Breast epithelium (tissue), 4 donors: ENCODE measurements at regions of chr1 and their contacts with region 1.

Region 1: DNA sequence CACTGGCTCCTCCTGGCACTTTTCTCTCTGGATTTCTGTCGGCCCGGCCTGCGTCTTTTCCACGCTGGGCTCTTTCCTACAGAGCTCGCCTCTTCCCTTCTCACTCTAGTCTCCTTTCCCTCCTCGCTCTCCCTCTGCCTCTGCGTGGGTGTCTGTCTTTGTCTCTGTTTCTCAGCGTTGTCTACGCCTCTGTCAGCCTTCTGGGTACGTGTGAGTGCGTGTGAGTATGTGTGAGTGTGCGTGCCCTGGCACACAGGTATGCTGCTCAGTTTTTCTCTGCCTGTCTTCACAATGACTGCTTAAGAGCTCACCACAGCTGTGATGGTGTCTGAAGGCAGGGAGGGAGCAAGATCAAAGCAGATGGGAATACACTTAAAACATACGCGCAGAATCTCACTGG is 77.7 kb downstream of the KIRREL1 start:
- DNase-seq: no peak
- H3K4me3 ChIP-seq: no peak overlapping the region
- H3K27ac ChIP-seq: peak overlapping the region in 1 of 2 donors; percentile 58
- H3K4me1 ChIP-seq: peaks cover 0 to 9% of the 10 kb centered on the region in 2 donors
- H3K27me3 ChIP-seq: no peaks in the 10 kb centered on the region
- CTCF ChIP-seq: no peak
- POLR2A ChIP-seq: no peak

Region 2: GRCh38 chr1:157419845-157420542 is 651.1 kb before region 1 on chr1:
- intact Hi-C with region 1: loop called (anchors 5 kb)
- DNase-seq: no peak
- H3K4me3 ChIP-seq: no peak overlapping the region
- H3K27ac ChIP-seq: no peak overlapping the region
- H3K4me1 ChIP-seq: no peaks in the 10 kb centered on the region
- H3K27me3 ChIP-seq: peaks cover 0 to 3% of the 10 kb centered on the region in 2 donors
- CTCF ChIP-seq: no peak
- POLR2A ChIP-seq: no peak

Region 3: DNA sequence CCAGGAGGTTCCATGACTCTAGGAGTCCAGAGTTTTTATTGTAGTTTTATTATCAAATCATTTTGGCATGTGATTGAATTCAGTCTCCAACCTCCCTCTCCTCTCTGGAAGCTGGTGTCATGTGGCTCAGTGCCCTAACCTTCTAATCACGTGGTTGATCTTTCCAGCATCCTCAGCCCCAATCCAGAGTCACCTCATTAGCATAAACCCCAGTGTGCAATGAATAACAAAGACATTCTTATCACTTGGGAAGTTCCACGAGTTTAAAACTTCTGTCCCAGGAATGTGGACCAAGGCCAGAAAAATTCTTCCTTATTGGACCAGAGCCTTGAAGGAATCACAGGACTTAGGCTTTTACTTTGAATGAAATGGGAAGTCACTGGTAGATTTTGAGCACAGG is 25.5 kb before region 1 on chr1:
- intact Hi-C with region 1: no loop called
- DNase-seq: no peak
- H3K4me3 ChIP-seq: no peak overlapping the region
- H3K27ac ChIP-seq: peak overlapping the region in 1 of 2 donors; percentile 30
- H3K4me1 ChIP-seq: no peaks in the 10 kb centered on the region
- H3K27me3 ChIP-seq: no peaks in the 10 kb centered on the region
- CTCF ChIP-seq: no peak
- POLR2A ChIP-seq: no peak